Gastrocnemius medialis (tissue), 4 donors: ENCODE measurements at regions of chr19 and their contacts with region 1.

Region 1: GRCh38 chr19:44782729-44783128 is 5.0 kb downstream of the CBLC start:
- DNase-seq: no peak
- ATAC-seq: no peak
- H3K4me3 ChIP-seq: no peak overlapping the region
- H3K27ac ChIP-seq: no peak overlapping the region
- H3K4me1 ChIP-seq: peaks cover 4 to 6% of the 10 kb centered on the region in 2 donors
- H3K27me3 ChIP-seq: no peaks in the 10 kb centered on the region
- CTCF ChIP-seq: no peak
- POLR2A ChIP-seq: no peak

Region 2: DNA sequence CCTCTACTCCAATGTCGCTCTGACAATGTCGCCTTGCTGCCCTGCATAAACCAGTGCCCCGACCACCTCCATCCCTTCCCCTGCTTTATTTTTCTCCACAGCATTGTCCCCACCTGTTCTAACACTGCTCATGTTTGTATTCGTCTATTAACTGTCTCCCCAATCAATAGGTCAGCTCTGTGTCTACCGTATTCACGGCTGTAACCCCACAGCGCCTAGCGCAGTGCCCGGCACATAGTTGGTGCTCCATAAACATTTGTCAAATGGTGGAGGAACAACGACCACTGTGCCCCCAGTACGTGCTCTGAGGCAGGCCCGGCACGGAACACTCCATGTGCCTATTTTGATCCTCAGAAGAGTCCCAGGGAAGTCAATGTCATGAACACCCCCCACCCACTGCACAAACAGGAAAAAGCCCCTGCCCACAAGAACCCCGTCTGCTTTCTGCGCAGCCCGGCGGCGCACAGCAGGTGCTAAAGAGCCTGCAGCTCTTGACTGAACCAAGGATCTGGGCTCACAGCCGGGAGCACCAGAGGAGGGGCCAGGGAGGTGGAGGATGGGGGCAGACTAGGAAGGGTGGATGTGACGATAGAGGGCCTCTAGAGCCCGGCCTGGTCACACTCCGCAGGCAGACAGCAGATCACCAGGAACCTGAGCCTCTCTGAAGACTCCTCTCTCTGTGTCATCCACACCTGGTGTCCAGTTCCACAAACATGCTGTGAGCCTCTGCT is 85.6 kb before region 1 on chr19:
- in situ Hi-C with region 1: no loop called
- intact Hi-C with region 1: no loop called
- DNase-seq: peak in 1 of 2 donors; percentile 13
- ATAC-seq: peak in 1 of 2 donors; percentile 58
- H3K4me3 ChIP-seq: no peak overlapping the region
- H3K27ac ChIP-seq: no peak overlapping the region
- H3K4me1 ChIP-seq: no peaks in the 10 kb centered on the region
- H3K27me3 ChIP-seq: no peaks in the 10 kb centered on the region
- CTCF ChIP-seq: no peak
- POLR2A ChIP-seq: no peak

Region 3: DNA sequence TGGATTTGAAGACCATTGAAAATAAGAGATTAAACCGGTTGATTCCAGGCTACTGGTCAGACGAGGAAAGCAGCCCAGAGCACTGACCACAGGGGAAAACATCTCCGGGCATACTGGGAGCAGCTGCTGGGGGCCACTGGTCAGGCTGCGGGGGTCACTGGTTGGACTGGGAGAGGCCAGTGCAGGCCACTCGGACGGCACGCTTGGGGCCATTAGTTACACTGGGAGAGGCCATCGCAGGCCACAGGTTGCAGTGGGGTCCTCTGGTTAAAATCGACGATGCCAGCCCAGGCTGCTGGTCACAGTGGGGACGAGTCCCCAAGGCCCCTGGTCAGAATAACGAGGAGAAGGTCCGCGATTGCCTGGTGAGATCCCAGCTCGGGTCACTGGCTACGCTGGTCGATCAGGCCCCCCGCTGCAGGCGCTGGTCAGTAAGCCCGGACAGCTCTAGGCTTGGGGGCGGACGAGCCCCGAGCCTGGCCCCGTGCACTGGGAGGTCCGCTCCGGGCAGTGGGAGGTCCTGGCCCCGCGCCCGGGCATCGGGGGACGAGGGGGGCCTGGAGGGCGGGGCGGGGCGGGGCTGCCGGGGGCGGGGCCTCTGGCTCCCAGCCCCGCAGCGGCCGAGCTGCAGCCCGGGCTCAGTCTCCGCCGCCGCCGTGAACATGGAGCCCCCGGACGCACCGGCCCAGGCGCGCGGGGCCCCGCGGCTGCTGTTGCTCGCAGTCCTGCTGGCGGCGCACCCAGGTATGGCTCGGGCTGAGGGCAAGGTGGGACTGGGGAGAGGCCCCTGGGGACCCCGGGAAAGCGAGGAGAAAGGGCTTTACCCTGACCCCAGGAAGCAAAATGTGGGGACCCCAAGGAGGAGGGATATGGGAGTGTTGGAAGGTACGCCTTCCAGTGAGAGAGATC is 26.0 kb after region 1 on chr19 and contains the start of gene BCAM:
- in situ Hi-C with region 1: no loop called
- intact Hi-C with region 1: loop called (anchors 1 kb)
- DNase-seq: peak; percentile 11 to 35
- ATAC-seq: peak; percentile 62 to 72
- H3K4me3 ChIP-seq: peak within 1 kb of the TSS; percentile 61 to 77 (median 69)
- H3K27ac ChIP-seq: peak within 1 kb of the TSS; percentile 41 to 82 (median 72)
- H3K4me1 ChIP-seq: peaks cover 17 to 26% of the 10 kb centered on the region in 2 donors
- H3K27me3 ChIP-seq: no peaks in the 10 kb centered on the region
- CTCF ChIP-seq: no peak
- POLR2A ChIP-seq: peak; percentile 18 to 36
- total RNA-seq, gene BCAM: 10.2 to 24.6 (median 23.6) TPM

Region 4: GRCh38 chr19:44839276-44839675 is 56.5 kb after region 1 on chr19:
- in situ Hi-C with region 1: loop called in 2 of 4 experiments (anchors 5 to 10 kb)
- intact Hi-C with region 1: no loop called
- DNase-seq: no peak
- ATAC-seq: no peak
- H3K4me3 ChIP-seq: no peak overlapping the region
- H3K27ac ChIP-seq: no peak overlapping the region
- H3K4me1 ChIP-seq: peaks cover 0 to under 1% of the 10 kb centered on the region in 2 donors
- H3K27me3 ChIP-seq: no peaks in the 10 kb centered on the region
- CTCF ChIP-seq: no peak
- POLR2A ChIP-seq: no peak